CD8-positive, alpha-beta T cell (primary cell): ENCODE measurements at regions of chr2 and their contacts with region 1.

Region 1: GRCh38 chr2:152717228-152718075 is at the start of gene PRPF40A:
- DNase-seq: peak; percentile 97 to 99 (median 99)
- ATAC-seq: peak; percentile 79
- H3K4me3 ChIP-seq: peak within 1 kb of the TSS; percentile 85 to 95
- H3K4me3 Mint-ChIP-seq: peak within 1 kb of the TSS; percentile 100
- H3K27ac ChIP-seq: peak within 1 kb of the TSS; percentile 95 to 99
- H3K27ac Mint-ChIP-seq: peak within 1 kb of the TSS; percentile 100
- H3K4me1 ChIP-seq: peaks cover 22% of the 10 kb centered on the region
- H3K4me1 Mint-ChIP-seq: peaks cover 59% of the 10 kb centered on the region
- H3K27me3 ChIP-seq: no peaks in the 10 kb centered on the region
- H3K27me3 Mint-ChIP-seq: no peaks in the 10 kb centered on the region
- CTCF ChIP-seq: no peak
- total RNA-seq, gene PRPF40A: 164 to 180 TPM

Region 2: DNA sequence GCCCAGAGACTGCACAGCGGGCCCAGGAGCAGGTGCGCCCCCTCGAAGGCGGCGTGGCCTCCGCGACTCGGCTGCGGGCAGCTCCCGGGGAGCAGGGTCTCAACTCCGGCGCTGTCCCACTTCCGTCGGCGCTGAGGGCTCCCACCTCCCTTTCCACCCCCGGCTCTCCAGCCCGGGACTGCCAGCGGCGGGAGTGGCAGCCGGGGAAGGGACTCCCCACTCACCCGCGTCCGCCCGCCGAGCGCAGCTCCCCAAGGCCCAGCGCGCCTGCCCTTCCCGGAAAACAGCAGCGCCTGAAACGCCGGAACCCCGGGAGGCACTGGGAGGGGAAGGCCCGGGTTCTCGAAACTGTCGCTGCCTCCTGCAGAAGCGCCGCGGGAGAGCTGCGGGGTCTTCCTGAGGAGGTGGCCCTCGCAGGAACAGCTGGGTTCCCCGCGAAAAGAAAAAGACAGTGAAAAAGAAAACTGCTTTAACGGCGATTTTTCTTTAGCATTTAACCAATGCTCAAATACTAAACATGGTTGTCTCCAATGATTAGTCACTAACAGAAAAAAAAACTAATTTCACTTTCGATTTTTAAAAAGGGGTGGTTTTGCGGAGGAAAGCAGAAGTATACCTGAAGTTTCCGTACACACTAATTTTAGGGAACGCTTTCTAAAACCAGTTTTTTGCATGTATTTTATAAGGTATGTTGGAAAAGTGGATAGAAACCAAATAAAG is 1427.9 kb before region 1 on chr2 and contains the start of gene NMI:
- CTCF ChIA-PET with region 1: no interaction called
- POLR2A ChIA-PET with region 1: no interaction called
- intact Hi-C with region 1: loop called in 1 of 2 experiments (anchors 5 kb)
- DNase-seq: peak; percentile 30 to 82 (median 64)
- ATAC-seq: peak; percentile 68
- H3K4me3 ChIP-seq: peak within 1 kb of the TSS; percentile 89 to 92
- H3K4me3 Mint-ChIP-seq: peak within 1 kb of the TSS; percentile 95
- H3K27ac ChIP-seq: peak within 1 kb of the TSS; percentile 92 to 97
- H3K27ac Mint-ChIP-seq: peak within 1 kb of the TSS; percentile 99
- H3K4me1 ChIP-seq: peaks cover 31% of the 10 kb centered on the region
- H3K4me1 Mint-ChIP-seq: peaks cover 46% of the 10 kb centered on the region
- H3K27me3 ChIP-seq: no peaks in the 10 kb centered on the region
- H3K27me3 Mint-ChIP-seq: no peaks in the 10 kb centered on the region
- CTCF ChIP-seq: no peak
- total RNA-seq, gene NMI: 16.9 to 18.0 TPM

Region 3: DNA sequence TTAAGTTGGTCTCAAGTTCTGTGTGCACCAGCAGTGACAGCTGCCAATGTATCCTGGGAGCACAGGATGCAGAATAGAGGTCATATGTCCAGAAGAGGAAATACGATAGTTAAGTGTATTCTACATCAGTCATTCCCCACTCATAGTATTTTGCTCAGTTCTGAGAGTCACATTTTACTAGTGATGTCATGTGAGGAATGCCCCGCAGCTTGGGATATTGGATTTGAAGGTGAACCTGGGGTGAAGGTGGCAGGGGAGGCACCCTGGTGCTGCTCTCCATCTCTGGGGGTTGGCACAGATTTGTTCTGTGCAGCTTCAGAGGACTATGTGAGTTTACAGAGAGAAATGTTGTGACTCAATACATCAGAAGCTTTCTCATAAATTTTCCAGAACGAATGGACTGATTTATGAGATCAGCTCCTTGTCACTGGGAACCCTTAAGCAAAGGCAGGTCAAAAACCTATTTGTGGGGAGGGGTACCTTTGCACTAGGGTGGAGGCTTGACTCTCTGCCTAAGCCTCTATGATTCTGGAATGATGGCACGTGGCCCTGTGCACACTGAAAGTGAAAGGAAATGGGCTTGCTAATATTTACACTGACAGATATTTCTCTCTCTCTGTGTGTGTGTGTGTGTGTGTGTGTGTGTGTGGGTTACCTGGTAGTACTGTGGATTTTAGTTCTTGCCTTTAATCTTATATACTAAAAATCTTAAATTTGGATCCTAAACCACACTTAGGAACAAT is 1079.1 kb before region 1 on chr2:
- CTCF ChIA-PET with region 1: no interaction called
- POLR2A ChIA-PET with region 1: no interaction called
- intact Hi-C with region 1: loop called in 1 of 2 experiments (anchors 10 kb)
- DNase-seq: peak in 7 of 9 experiments; percentile 21 to 68 (median 31)
- ATAC-seq: peak; percentile 37
- H3K4me3 ChIP-seq: no peak overlapping the region
- H3K4me3 Mint-ChIP-seq: peak overlapping the region; percentile 72
- H3K27ac ChIP-seq: peak overlapping the region; percentile 42 to 79
- H3K27ac Mint-ChIP-seq: peak overlapping the region; percentile 93
- H3K4me1 ChIP-seq: peaks cover 43% of the 10 kb centered on the region
- H3K4me1 Mint-ChIP-seq: peaks cover 43% of the 10 kb centered on the region
- H3K27me3 ChIP-seq: no peaks in the 10 kb centered on the region
- H3K27me3 Mint-ChIP-seq: no peaks in the 10 kb centered on the region
- CTCF ChIP-seq: no peak

Region 4: GRCh38 chr2:152694161-152694661 is 23.2 kb before region 1 on chr2:
- CTCF ChIA-PET with region 1: no interaction called
- POLR2A ChIA-PET with region 1: interaction called, 3 read pairs
- intact Hi-C with region 1: loop called (anchors 2 kb)
- DNase-seq: peak in 5 of 9 experiments; percentile 7 to 63 (median 24)
- ATAC-seq: peak; percentile 80
- H3K4me3 ChIP-seq: peak overlapping the region in 1 of 2 experiments; percentile 46
- H3K4me3 Mint-ChIP-seq: peak overlapping the region; percentile 80
- H3K27ac ChIP-seq: peak overlapping the region; percentile 4 to 75
- H3K27ac Mint-ChIP-seq: peak overlapping the region; percentile 89
- H3K4me1 ChIP-seq: peaks cover 9% of the 10 kb centered on the region
- H3K4me1 Mint-ChIP-seq: peaks cover 49% of the 10 kb centered on the region
- H3K27me3 ChIP-seq: no peaks in the 10 kb centered on the region
- H3K27me3 Mint-ChIP-seq: no peaks in the 10 kb centered on the region
- CTCF ChIP-seq: no peak

Region 5: DNA sequence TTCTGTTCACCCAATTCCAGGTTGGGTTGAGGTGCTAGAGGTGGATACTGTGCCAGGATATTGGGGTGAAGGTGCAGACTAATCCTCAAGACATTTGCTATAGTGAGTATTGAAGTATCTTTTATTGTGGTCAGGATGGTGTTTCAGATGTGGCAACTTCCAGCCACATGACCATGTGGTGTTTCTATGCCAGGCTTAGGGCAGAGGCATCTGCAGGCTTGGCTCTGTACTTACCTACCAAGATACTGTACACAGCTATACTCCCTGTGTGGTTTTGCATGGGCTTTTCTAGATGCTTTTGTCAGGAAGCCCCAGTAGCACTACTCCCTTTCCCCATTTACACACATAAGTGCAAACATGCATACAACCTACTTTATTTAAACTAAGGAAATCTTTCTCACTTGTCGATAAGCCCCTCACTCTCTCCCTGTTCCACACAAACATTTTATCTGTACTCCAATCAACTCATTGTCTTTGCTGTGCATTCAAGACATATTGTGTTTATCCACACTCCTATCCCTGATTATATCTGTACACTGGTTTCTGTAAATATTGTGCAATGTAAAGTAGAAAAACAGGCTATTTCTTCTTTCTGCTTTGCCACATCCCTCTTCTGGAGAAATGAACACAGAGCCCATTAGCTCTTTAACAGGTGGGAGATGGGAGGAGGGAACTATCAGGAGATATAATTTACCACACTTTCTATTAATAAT is 13.3 kb after region 1 on chr2:
- CTCF ChIA-PET with region 1: interaction called, 3 read pairs
- POLR2A ChIA-PET with region 1: interaction called, 12 read pairs
- intact Hi-C with region 1: no loop called
- DNase-seq: peak; percentile 27 to 86 (median 42)
- ATAC-seq: peak; percentile 89
- H3K4me3 ChIP-seq: no peak overlapping the region
- H3K4me3 Mint-ChIP-seq: no peak overlapping the region
- H3K27ac ChIP-seq: no peak overlapping the region
- H3K27ac Mint-ChIP-seq: no peak overlapping the region
- H3K4me1 ChIP-seq: peaks cover 18% of the 10 kb centered on the region
- H3K4me1 Mint-ChIP-seq: peaks cover 27% of the 10 kb centered on the region
- H3K27me3 ChIP-seq: no peaks in the 10 kb centered on the region
- H3K27me3 Mint-ChIP-seq: no peaks in the 10 kb centered on the region
- CTCF ChIP-seq: no peak

Region 6: DNA sequence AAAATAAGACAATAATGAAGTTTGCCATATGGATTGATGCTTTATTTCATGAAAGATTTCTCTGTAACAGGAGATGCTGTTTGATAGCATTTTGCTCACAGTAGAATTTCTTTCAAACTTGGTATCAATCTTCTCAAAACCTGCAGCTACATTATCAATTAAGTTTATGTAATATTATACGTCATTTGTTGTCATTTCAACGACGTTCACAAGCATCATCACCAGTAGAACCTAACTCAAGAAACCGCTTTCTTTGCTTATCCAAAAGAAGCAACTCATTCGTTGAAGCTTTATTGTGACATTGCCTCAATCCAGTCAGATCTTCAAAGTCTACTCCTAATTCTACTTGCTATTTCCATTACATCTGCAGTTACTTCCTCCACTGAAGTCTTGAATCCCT is 1083.0 kb after region 1 on chr2:
- CTCF ChIA-PET with region 1: no interaction called
- POLR2A ChIA-PET with region 1: no interaction called
- intact Hi-C with region 1: no loop called
- DNase-seq: no peak
- ATAC-seq: no peak
- H3K4me3 ChIP-seq: no peak overlapping the region
- H3K4me3 Mint-ChIP-seq: no peak overlapping the region
- H3K27ac ChIP-seq: no peak overlapping the region
- H3K27ac Mint-ChIP-seq: no peak overlapping the region
- H3K4me1 ChIP-seq: no peaks in the 10 kb centered on the region
- H3K4me1 Mint-ChIP-seq: no peaks in the 10 kb centered on the region
- H3K27me3 ChIP-seq: no peaks in the 10 kb centered on the region
- H3K27me3 Mint-ChIP-seq: no peaks in the 10 kb centered on the region
- CTCF ChIP-seq: no peak